ENCODE measurements at regions of chr19 and their contacts with region 1.

Region 1: GRCh38 chr19:7799640-7800355 is 30.2 kb upstream of the EVI5L start:
- DNase-seq: peak; percentile 62 to 75 (median 62)
- ATAC-seq: peak; percentile 90 to 98 (median 96)
- H3K4me3 ChIP-seq: no peak overlapping the region
- H3K27ac ChIP-seq: no peak overlapping the region
- H3K4me1 ChIP-seq: peaks cover 0 to 5% (median 2%) of the 10 kb centered on the region in 4 donors
- H3K27me3 ChIP-seq: no peaks in the 10 kb centered on the region
- CTCF ChIP-seq: peak; percentile 48 to 64 (median 54)
- POLR2A ChIP-seq: no peak

Region 2: GRCh38 chr19:7565332-7565731 is 234.5 kb before region 1 on chr19:
- intact Hi-C with region 1: loop called (anchors 5 to 10 kb)
- DNase-seq: no peak
- ATAC-seq: no peak
- H3K4me3 ChIP-seq: no peak overlapping the region
- H3K27ac ChIP-seq: no peak overlapping the region
- H3K4me1 ChIP-seq: no peaks in the 10 kb centered on the region
- H3K27me3 ChIP-seq: no peaks in the 10 kb centered on the region
- CTCF ChIP-seq: no peak
- POLR2A ChIP-seq: no peak

Region 3: DNA sequence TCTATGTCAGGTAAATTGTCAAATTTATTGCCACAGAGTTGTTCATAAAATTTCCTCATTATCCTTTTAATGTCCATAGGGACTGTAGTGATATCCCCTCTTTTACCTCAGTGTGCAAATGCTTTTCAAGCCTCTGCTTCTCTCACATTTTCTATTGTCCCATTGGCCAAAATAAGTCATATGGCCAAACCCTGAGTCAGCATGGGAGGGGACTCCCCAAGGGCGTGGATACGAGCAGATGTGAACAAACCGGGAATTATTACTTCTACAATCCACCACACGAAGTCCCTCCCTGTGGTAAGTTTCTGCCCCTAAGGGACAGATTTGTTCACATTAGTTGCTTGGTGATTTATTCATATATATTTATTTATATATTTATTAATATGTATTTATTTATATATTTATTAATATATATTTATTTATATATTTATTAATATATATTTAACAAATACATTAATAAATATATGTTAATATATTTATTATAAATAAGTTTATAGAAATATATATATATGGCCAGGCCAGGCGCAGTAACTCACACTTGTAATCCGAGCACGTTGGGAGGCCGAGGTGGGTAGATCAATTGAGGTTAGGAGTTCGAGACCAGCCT is 224.3 kb before region 1 on chr19:
- intact Hi-C with region 1: loop called in 1 of 2 experiments (anchors 10 kb)
- DNase-seq: no peak
- ATAC-seq: no peak
- H3K4me3 ChIP-seq: no peak overlapping the region
- H3K27ac ChIP-seq: no peak overlapping the region
- H3K4me1 ChIP-seq: no peaks in the 10 kb centered on the region
- H3K27me3 ChIP-seq: no peaks in the 10 kb centered on the region
- CTCF ChIP-seq: no peak
- POLR2A ChIP-seq: no peak

Region 4: DNA sequence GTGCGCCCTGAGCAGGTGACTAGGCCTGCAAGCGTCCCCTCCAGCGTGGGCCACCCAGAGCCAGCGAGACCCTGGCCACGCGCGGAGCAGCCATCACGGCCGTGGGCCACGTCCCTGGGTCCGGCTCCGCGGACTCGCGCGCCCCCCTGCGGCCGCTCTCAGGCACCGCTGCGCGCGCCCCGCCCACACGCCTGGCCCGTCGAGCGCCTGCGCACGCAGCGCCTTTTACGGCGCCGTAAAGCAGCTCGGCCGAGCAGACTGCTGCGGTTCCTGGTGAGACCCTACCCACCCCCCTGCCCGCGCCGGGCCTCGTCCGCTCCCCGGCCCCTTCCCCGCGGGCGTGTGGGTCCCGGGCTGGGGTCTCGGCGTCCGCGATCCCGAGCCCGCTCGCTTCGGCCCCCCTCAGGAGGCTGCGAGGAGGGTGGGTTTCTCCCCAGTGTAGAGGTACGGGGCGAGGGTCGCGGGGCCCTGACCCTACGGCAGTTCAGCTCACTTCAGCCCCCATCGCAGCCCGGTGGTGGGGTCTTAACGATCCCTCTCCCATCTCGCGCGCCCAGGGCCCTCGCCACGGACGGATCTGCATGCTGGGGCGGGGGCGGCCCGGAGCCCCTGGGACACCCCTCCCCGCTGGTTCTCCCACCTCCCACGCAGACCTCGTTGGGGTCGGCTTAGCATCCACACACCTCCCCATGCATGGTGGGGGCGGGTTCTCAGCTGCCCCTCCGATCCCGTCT is 119.0 kb before region 1 on chr19 and contains the start of gene TRAPPC5:
- intact Hi-C with region 1: loop called (anchors 10 kb)
- DNase-seq: peak; percentile 89 to 93 (median 90)
- ATAC-seq: peak; percentile 83 to 94 (median 87)
- H3K4me3 ChIP-seq: peak within 1 kb of the TSS; percentile 72 to 89 (median 89)
- H3K27ac ChIP-seq: peak within 1 kb of the TSS; percentile 71 to 90 (median 72)
- H3K4me1 ChIP-seq: peaks cover 0 to 10% (median 4%) of the 10 kb centered on the region in 4 donors
- H3K27me3 ChIP-seq: no peaks in the 10 kb centered on the region
- CTCF ChIP-seq: peak; percentile 99
- POLR2A ChIP-seq: peak; percentile 32
- total RNA-seq, gene TRAPPC5: 41.7 to 66.5 (median 52.0) TPM

Region 5: DNA sequence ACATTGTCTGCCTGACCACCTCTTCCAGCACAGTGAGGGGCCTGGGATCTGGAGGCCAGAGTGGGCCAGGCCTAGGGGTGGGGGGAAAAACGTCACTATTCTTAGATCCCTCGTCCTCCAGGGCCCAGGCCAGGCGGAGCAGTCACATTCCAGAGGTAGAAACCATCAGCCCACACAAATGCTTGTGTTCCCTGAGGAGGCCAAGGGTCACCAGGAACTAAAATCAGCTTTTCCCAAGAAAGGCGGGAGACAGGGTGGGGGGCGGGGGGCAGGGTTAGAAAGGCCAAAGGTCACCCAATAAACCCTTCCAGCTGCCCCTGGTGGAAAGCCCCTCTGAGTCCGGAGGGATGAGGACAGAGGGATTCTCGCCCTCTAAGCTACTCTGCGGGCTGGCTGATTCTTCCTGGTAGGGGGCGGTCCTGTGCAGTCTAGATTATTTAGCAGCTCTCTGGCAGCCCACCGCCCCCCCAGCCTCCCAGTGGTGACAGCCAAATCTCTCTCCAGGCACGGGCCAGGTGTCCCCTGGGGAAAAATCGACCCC is 229.2 kb after region 1 on chr19:
- intact Hi-C with region 1: no loop called
- DNase-seq: no peak
- ATAC-seq: peak in 1 of 4 donors; percentile 25
- H3K4me3 ChIP-seq: no peak overlapping the region
- H3K27ac ChIP-seq: no peak overlapping the region
- H3K4me1 ChIP-seq: no peaks in the 10 kb centered on the region
- H3K27me3 ChIP-seq: no peaks in the 10 kb centered on the region
- CTCF ChIP-seq: no peak
- POLR2A ChIP-seq: no peak

Measured in right lobe of liver (tissue), 6 donors.